Panc1 (cell line): ENCODE measurements at regions of chr11 and their contacts with region 1.

Region 1: DNA sequence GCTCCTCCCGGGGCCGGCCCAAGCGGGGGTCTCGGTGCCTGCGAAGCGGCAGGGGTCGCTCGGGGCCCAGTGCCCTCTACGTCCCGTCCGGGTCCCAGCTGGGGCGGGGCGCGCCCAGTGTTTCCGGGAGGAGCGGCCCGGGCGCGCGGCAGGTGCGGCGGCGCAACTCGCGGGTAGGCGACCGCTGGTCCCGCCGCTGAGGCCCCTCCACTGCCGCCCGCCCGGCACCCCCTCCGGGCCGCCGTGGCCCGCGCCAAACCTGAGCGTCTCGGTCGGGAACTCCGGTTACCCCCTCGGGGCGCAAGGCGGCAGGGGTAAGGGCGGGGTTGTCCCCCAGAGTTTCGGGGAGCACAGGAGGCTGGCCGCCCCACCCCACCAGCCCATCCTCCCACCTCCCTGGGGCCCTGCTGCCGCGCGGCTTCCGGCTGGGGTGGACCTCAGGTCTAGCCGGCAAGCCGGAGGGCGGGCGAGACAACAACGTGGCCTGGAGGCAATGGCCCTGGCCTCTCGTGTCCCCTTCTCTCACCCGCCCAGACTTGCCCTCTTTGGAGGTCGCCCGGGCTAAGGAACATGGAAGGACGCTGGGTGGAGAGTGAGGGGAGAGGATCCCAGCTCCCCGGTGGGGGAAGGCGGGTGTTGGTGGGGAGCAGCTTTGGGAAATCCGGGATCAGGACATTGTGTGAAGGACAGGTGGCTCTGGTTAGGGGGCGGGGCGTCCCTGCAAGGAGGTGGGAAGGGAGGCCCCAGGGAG is 398 bp upstream of the CRACR2B start:
- DNase-seq: no peak
- ATAC-seq: peak; percentile 5; the same call in 1 of the 2 replicates
- H3K4me3 ChIP-seq: peak overlapping the region; percentile 44 to 55
- H3K27ac ChIP-seq: peak overlapping the region; percentile 92
- H3K4me1 ChIP-seq: peaks cover 60% of the 10 kb centered on the region
- H3K27me3 ChIP-seq: no peaks in the 10 kb centered on the region
- CTCF ChIP-seq: no peak

Region 2: GRCh38 chr11:495537-495931 is 331.8 kb before region 1 on chr11:
- CTCF ChIA-PET with region 1: no interaction called
- POLR2A ChIA-PET with region 1: no interaction called
- in situ Hi-C with region 1: no loop called
- intact Hi-C with region 1: no loop called
- DNase-seq: no peak
- ATAC-seq: no peak
- H3K4me3 ChIP-seq: no peak overlapping the region
- H3K27ac ChIP-seq: no peak overlapping the region
- H3K4me1 ChIP-seq: no peaks in the 10 kb centered on the region
- H3K27me3 ChIP-seq: no peaks in the 10 kb centered on the region
- CTCF ChIP-seq: no peak

Region 3: DNA sequence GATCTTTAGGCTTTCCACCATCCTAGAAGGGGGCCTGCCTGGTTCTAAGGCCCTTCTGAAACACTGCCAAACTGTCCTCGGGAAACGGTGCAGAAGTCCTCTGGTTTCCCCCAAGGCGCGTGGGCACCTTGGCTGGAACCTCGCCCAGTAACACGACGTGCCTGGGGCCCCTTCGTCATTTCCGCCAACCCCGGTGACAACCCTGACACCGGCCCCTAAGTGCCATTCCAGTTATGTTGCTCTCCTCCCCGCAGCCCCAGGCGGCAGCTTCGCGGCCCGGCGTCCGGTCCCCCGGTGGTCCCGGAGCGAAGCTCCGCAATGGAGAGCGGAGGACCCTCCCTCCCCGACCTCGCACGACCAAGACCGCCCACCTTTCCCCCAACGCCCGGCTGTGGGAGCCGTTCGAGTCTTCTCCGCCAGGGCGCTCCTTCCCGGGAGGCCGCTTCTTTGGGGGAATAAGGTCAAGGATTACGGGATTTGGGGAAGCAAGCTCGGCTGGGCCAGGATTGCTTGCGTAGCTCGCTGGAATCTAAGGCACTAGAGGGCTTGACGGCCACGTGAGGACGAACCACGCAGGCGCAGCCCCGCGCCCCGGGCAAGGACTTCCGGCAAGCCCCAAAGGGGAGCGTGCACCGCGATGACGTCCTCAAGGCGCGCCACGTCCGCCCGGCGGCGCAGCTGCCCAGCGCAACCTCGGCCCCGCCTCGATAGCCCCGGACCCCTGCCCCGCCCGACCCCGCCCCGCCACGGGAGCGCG is 320.9 kb before region 1 on chr11:
- CTCF ChIA-PET with region 1: interaction called, 14 read pairs
- POLR2A ChIA-PET with region 1: no interaction called
- in situ Hi-C with region 1: no loop called
- intact Hi-C with region 1: no loop called
- DNase-seq: peak; percentile 91
- ATAC-seq: peak; percentile 88
- H3K4me3 ChIP-seq: peak overlapping the region; percentile 83 to 94
- H3K27ac ChIP-seq: peak overlapping the region; percentile 99
- H3K4me1 ChIP-seq: peaks cover 24% of the 10 kb centered on the region
- H3K27me3 ChIP-seq: no peaks in the 10 kb centered on the region
- CTCF ChIP-seq: no peak

Region 4: DNA sequence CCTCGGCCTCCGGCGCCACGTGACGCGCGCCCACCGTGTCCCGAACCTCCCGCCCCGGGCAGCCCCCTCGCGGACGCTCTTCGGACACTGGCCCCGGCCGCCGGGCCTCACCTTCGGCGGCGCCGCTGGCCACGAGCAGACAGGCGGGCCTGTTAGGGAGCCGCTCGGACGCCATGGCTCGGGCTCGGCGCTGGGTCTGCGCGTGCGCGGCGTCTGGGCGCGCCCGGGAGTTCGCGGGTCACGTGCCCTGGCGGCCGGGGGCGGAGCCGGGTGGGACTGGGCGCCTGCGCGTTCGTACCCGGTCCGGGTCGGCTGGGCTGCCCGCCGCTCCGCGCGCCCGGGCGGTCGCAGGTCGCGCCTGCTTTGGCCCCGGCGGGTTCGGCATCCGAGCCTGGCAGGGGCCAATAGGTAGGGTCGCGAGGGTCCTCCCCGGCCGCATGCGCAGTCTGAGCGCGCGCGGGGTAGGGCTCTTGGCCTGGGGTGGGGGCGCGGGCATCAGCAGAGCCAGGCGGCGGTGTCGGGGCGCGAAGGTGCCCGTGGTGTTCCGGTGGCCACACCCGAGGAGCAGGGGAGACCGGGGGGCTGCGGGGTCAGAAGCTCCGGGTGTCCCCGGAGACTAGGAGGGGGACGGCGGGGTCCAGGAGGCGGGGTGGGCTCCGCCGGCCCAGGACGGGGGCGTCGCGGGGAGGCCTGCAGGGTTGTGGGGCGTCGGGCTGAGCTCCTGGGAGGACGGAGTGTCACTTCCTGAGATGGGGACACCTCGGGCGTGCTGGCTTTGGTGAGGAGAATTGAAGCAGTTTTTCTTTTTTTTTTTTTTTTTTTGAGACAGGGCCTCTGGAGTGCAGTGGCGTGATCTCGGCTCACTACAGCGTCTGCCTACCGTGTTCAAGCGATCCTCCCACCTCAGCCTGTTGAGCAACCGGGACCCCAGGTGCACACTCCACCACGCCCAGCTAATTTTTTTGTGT is 49.7 kb before region 1 on chr11 and contains the start of gene GATD1:
- CTCF ChIA-PET with region 1: no interaction called
- POLR2A ChIA-PET with region 1: no interaction called
- in situ Hi-C with region 1: no loop called
- intact Hi-C with region 1: no loop called
- DNase-seq: no peak
- ATAC-seq: peak; percentile 84
- H3K4me3 ChIP-seq: peak within 1 kb of the TSS; percentile 89 to 96
- H3K27ac ChIP-seq: peak within 1 kb of the TSS; percentile 93
- H3K4me1 ChIP-seq: peaks cover 43% of the 10 kb centered on the region
- H3K27me3 ChIP-seq: no peaks in the 10 kb centered on the region
- CTCF ChIP-seq: no peak
- total RNA-seq, gene GATD1: 229 TPM